ENCODE measurements at regions of chr5 and their contacts with region 1.

Region 1: DNA sequence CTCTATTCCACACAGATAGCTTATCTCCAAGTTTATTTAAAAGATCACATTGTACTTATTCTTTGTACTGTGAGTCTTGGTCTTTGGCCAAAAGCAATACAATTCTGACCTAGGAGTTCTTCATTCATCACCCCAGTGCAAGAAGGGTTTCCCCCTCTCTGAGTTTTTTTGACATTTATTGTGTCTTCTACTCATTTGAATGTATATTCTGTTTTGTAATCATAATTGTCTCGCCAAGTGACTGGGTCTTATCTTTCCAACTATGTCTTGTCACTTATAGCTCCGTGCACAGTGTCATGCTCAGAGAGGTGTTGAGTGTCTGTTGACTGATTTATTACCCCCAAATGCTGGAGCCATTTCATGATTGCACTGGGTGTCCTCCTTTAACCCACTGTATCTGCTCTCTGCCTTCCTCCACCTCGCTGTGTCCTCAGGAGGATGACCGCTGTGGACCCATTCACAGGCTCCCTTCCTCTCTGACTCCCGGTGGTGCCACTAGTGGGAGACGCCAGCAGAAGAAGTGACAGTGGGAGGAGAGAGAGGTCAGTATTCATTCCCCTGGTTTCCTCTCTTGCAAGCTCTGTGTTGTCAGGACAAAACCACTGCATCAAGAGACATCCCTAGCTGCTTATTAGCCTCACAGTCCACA is 11.2 kb upstream of the TRIO start:
- DNase-seq: no peak
- H3K4me3 ChIP-seq: no peak overlapping the region
- H3K27me3 ChIP-seq: no peaks in the 10 kb centered on the region
- CTCF ChIP-seq: no peak

Region 2: GRCh38 chr5:14202462-14202861 is 70.5 kb after region 1 on chr5:
- CTCF ChIA-PET with region 1: no interaction called
- POLR2A ChIA-PET with region 1: interaction called, 14 read pairs
- DNase-seq: no peak
- H3K4me3 ChIP-seq: no peak overlapping the region
- H3K27me3 ChIP-seq: no peaks in the 10 kb centered on the region
- CTCF ChIP-seq: no peak

Region 3: GRCh38 chr5:14628346-14628745 is 496.4 kb after region 1 on chr5:
- CTCF ChIA-PET with region 1: no interaction called
- POLR2A ChIA-PET with region 1: no interaction called
- DNase-seq: peak; percentile 3
- H3K4me3 ChIP-seq: no peak overlapping the region
- H3K27me3 ChIP-seq: no peaks in the 10 kb centered on the region; the same call in 1 of the 2 replicates
- CTCF ChIP-seq: no peak